ENCODE measurements at regions of chrX and their contacts with region 1.

Region 1: GRCh38 chrX:67555578-67556203 is 11.9 kb downstream of the AR start:
- DNase-seq: peak; percentile 58
- H3K4me3 Mint-ChIP-seq: no peak overlapping the region
- H3K27ac Mint-ChIP-seq: no peak overlapping the region
- H3K4me1 Mint-ChIP-seq: no peaks in the 10 kb centered on the region
- H3K27me3 Mint-ChIP-seq: no peaks in the 10 kb centered on the region
- CTCF ChIP-seq: peak; percentile 66

Region 2: GRCh38 chrX:67724359-67725110 is 168.8 kb after region 1 on chrX:
- CTCF ChIA-PET with region 1: interaction called, 3 read pairs
- POLR2A ChIA-PET with region 1: no interaction called
- intact Hi-C with region 1: loop called (anchors 10 kb)
- DNase-seq: no peak
- H3K4me3 Mint-ChIP-seq: no peak overlapping the region
- H3K27ac Mint-ChIP-seq: no peak overlapping the region
- H3K4me1 Mint-ChIP-seq: no peaks in the 10 kb centered on the region
- H3K27me3 Mint-ChIP-seq: no peaks in the 10 kb centered on the region
- CTCF ChIP-seq: no peak

Region 3: GRCh38 chrX:67780694-67781109 is 225.0 kb after region 1 on chrX:
- CTCF ChIA-PET with region 1: interaction called, 9 read pairs
- POLR2A ChIA-PET with region 1: no interaction called
- intact Hi-C with region 1: loop called (anchors 2 kb)
- DNase-seq: peak; percentile 92
- H3K4me3 Mint-ChIP-seq: peak overlapping the region; percentile 36
- H3K27ac Mint-ChIP-seq: peak overlapping the region; percentile 88
- H3K4me1 Mint-ChIP-seq: peaks cover 8% of the 10 kb centered on the region
- H3K27me3 Mint-ChIP-seq: no peaks in the 10 kb centered on the region
- CTCF ChIP-seq: no peak

Region 4: DNA sequence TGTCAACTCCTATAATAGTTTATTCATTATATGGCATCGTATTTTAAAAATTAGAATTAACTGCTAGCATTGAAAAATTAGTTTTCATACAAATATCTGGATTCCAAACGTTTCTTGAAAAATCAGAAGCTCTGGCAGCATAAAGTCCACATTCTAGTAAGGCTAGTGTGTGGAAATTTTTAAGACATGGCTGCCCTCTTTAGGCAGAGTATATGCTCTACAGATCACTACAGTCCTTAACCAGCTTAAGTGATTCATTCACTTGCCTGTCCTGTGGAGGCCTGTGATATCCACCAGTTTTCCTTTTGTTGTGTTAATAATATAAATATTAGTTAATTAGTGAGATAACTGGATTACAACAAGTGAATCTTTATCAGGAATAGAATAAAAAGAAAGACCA is 590.4 kb after region 1 on chrX:
- CTCF ChIA-PET with region 1: interaction called, 5 read pairs
- POLR2A ChIA-PET with region 1: no interaction called
- intact Hi-C with region 1: loop called (anchors 5 kb)
- DNase-seq: peak; percentile 40
- H3K4me3 Mint-ChIP-seq: no peak overlapping the region
- H3K27ac Mint-ChIP-seq: no peak overlapping the region
- H3K4me1 Mint-ChIP-seq: no peaks in the 10 kb centered on the region
- H3K27me3 Mint-ChIP-seq: peaks cover 29% of the 10 kb centered on the region
- CTCF ChIP-seq: peak; percentile 65

Measured in MCF 10A (cell line).